CD14-positive monocyte (primary cell): ENCODE measurements at regions of chr16 and their contacts with region 1.

Region 1: GRCh38 chr16:2155091-2156021 is at the start of gene TRAF7:
- DNase-seq: peak; percentile 100
- H3K4me3 ChIP-seq: peak within 1 kb of the TSS; percentile 86 to 97 (median 91)
- H3K4me3 Mint-ChIP-seq: peak within 1 kb of the TSS; percentile 96 to 97
- H3K27ac ChIP-seq: peak within 1 kb of the TSS; percentile 62 to 86
- H3K27ac Mint-ChIP-seq: peak within 1 kb of the TSS; percentile 89 to 95 (median 90)
- H3K4me1 ChIP-seq: peaks cover 38 to 49% of the 10 kb centered on the region in 2 donors
- H3K4me1 Mint-ChIP-seq: peaks cover 55% of the 10 kb centered on the region
- H3K27me3 ChIP-seq: peaks cover 0 to 3% of the 10 kb centered on the region in 2 donors
- H3K27me3 Mint-ChIP-seq: peaks cover 2 to 5% (median 5%) of the 10 kb centered on the region in 3 donors
- CTCF ChIP-seq: no peak
- polyA plus RNA-seq, gene TRAF7: 5.9 to 41.9 (median 6.7) TPM

Region 2: DNA sequence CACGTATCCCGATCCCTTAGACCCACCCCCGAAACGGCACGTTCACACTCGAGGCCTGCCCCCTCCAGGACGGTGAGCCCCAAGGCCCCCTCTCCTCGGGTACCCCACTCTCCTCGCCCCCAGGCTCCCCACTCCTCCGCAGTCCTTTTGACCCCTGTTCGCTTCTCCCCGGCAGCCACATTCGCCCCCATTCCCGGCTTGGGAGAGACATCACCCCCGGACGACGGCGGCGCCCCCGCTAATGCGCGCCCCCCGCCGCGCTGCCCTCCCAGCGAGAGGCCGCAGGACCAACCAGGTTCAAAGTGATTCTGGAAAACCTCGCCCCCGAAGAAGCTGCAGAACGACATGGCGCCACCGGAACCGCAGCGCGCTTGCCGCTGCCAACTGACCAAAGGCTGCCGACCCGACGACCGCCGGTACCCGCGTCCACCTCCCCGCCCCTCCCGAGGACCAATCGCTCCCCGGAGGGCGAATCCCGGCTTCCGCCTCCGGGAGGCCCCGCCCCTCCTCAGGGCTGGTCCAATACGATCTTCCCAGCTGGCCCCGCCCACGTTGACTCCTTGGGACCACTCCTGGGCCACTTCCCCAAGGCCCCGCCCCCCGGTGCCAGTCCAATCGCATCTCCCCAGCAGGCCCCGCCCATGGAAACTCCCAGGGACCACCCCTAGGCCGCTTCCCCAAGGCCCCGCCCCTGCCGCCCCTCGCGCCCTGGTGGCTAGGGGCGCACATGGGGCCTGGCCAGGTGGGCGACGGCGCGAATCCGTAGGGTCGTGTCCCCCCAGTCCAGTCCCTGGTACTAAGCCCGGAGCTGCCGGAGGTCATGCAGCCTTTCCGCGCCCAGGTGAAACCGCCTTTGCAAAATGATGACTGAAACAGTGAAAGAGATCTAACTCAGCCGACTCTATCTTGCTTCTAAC is 212.3 kb before region 1 on chr16 and contains the start of gene MSRB1:
- intact Hi-C with region 1: loop called in 1 of 2 experiments (anchors 10 kb)
- DNase-seq: peak; percentile 98 to 99 (median 98)
- H3K4me3 ChIP-seq: peak within 1 kb of the TSS; percentile 86 to 99 (median 92)
- H3K4me3 Mint-ChIP-seq: peak within 1 kb of the TSS; percentile 89 to 91
- H3K27ac ChIP-seq: peak within 1 kb of the TSS; percentile 83
- H3K27ac Mint-ChIP-seq: peak within 1 kb of the TSS; percentile 85 to 95 (median 94)
- H3K4me1 ChIP-seq: peaks cover 53 to 60% of the 10 kb centered on the region in 2 donors
- H3K4me1 Mint-ChIP-seq: peaks cover 51% of the 10 kb centered on the region
- H3K27me3 ChIP-seq: no peaks in the 10 kb centered on the region
- H3K27me3 Mint-ChIP-seq: peaks cover 0 to 3% (median 2%) of the 10 kb centered on the region in 3 donors
- CTCF ChIP-seq: no peak
- polyA plus RNA-seq, gene MSRB1: 116 to 427 (median 416) TPM

Region 3: GRCh38 chr16:2047330-2048115 is 107.8 kb before region 1 on chr16 and contains the starts of genes NTHL1 and TSC2:
- intact Hi-C with region 1: loop called in 1 of 2 experiments (anchors 5 kb)
- DNase-seq: peak; percentile 91 to 93 (median 93)
- H3K4me3 ChIP-seq: peak within 1 kb of the TSS; percentile 66 to 96 (median 82)
- H3K4me3 Mint-ChIP-seq: peak within 1 kb of the TSS; percentile 90 to 93
- H3K27ac ChIP-seq: peak within 1 kb of the TSS in 1 of 2 donors; percentile 77
- H3K27ac Mint-ChIP-seq: peak within 1 kb of the TSS; percentile 38 to 92 (median 82)
- H3K4me1 ChIP-seq: peaks cover 26 to 37% of the 10 kb centered on the region in 2 donors
- H3K4me1 Mint-ChIP-seq: peaks cover 27% of the 10 kb centered on the region
- H3K27me3 ChIP-seq: no peaks in the 10 kb centered on the region
- H3K27me3 Mint-ChIP-seq: peaks cover 0 to 2% (median 0%) of the 10 kb centered on the region in 3 donors
- CTCF ChIP-seq: peak; percentile 56
- polyA plus RNA-seq, gene NTHL1: 9.2 to 22.4 (median 9.6) TPM
- polyA plus RNA-seq, gene TSC2: 11.7 to 95.1 (median 20.8) TPM

Region 4: GRCh38 chr16:2102471-2102870 is 52.9 kb before region 1 on chr16:
- intact Hi-C with region 1: no loop called
- DNase-seq: no peak
- H3K4me3 ChIP-seq: no peak overlapping the region
- H3K4me3 Mint-ChIP-seq: no peak overlapping the region
- H3K27ac ChIP-seq: no peak overlapping the region
- H3K27ac Mint-ChIP-seq: no peak overlapping the region
- H3K4me1 ChIP-seq: no peaks in the 10 kb centered on the region
- H3K4me1 Mint-ChIP-seq: no peaks in the 10 kb centered on the region
- H3K27me3 ChIP-seq: no peaks in the 10 kb centered on the region
- H3K27me3 Mint-ChIP-seq: no peaks in the 10 kb centered on the region
- CTCF ChIP-seq: no peak

Region 5: DNA sequence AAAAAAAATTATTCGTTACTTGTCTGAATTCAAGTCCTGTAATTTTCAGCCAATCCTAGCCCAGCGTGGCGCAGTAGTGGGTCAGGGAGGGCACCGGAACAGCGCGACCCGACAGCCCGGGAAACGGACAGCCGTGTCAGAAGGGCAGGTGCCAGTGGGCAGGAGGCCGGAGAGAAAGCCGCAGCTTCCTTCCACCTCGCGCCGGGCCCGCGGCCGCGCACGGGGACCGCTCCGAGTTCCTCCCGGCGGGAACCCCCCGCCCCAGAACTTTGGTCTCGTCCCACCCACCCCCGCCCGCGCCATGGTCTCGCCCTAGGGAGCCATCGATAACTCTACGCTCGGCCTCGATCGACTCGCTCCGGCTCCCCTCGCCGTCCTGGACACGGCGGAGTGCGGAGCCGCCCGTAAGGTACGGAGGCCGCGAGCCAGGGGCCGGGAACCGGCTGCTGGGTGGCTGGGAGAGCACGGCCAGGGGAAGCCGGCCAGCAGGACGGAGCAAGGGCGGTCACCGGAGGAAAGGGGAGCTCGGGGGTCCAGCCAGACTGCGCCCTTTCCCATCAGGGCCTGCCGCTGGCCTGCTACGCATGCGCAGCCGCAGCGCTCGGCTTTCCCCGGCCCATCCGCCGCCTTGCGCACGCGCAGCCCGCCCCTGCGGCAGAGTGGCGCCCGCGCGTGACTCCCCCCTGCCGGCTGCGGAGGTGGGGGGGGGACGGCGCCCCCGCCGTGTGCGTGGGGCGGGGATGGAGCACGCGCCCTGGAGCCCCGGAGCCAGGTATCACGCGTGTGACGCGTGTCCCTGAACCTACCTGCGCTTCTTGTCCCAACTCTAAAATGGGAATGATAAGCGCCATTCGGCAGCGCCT is 50.0 kb after region 1 on chr16 and contains the start of gene MLST8:
- intact Hi-C with region 1: loop called (anchors 2 to 5 kb)
- DNase-seq: peak; percentile 85 to 94 (median 93)
- H3K4me3 ChIP-seq: peak within 1 kb of the TSS; percentile 64 to 92 (median 77)
- H3K4me3 Mint-ChIP-seq: peak within 1 kb of the TSS; percentile 76 to 77
- H3K27ac ChIP-seq: peak within 1 kb of the TSS; percentile 60 to 83
- H3K27ac Mint-ChIP-seq: peak within 1 kb of the TSS; percentile 63 to 92 (median 81)
- H3K4me1 ChIP-seq: peaks cover 23 to 27% of the 10 kb centered on the region in 2 donors
- H3K4me1 Mint-ChIP-seq: peaks cover 25% of the 10 kb centered on the region
- H3K27me3 ChIP-seq: peaks cover 0 to 2% of the 10 kb centered on the region in 2 donors
- H3K27me3 Mint-ChIP-seq: peaks cover 4 to 14% (median 6%) of the 10 kb centered on the region in 3 donors
- CTCF ChIP-seq: peak; percentile 26
- polyA plus RNA-seq, gene MLST8: 29.9 to 54.3 (median 30.5) TPM